CD4-positive, alpha-beta T cell (primary cell): ENCODE measurements at regions of chr1 and their contacts with region 1.

Region 1: GRCh38 chr1:16122916-16123315 is 33.0 kb downstream of the EPHA2 start:
- DNase-seq: peak in 3 of 14 experiments; percentile 48 to 70 (median 56)
- ATAC-seq: no peak
- H3K4me3 ChIP-seq: no peak overlapping the region
- H3K4me3 Mint-ChIP-seq: no peak overlapping the region
- H3K27ac ChIP-seq: no peak overlapping the region
- H3K27ac Mint-ChIP-seq: no peak overlapping the region
- H3K4me1 ChIP-seq: peaks cover 12% of the 10 kb centered on the region
- H3K4me1 Mint-ChIP-seq: peaks cover 6% of the 10 kb centered on the region
- H3K27me3 ChIP-seq: no peaks in the 10 kb centered on the region
- H3K27me3 Mint-ChIP-seq: no peaks in the 10 kb centered on the region
- CTCF ChIP-seq: no peak

Region 2: DNA sequence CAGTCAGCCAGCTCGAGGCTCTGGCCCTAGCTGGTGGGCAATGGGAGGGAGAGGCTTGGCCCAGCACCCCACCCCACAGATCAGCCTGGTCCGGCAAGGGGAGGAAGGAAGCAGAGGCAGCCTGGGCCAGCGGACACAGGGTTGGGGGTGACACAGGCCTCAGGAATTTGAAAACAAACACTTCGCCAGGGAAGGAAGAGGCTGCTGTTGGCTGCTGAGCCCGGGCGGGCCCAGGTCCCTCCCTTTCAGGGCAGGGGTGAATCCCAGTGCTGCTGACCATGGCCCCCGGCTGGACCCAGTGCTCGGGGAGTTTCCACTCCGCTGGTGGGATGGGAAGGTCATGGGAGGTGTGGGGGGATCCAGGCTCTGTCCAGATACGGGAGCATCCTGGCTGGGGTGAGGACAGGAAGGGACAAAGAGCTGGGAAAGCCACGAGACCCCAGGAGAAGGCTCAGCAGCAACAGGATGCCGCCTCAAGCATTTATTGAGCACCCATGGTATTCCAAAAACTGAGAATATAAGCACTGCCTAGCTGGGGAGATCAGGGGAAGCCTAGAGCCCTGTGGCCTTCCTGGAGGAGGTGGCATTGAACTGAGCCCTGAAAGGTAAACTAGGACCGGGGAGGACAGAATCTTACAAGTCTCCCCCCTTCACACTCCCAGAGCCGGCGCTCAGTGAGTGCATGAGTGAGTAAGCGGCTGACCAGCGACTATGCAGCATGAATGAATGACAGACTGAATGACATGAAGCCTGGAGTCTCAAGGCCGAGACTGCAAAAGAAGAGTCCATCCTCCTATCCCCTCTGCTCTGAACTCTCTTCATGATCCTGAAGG is 59.2 kb after region 1 on chr1:
- CTCF ChIA-PET with region 1: no interaction called
- POLR2A ChIA-PET with region 1: no interaction called
- intact Hi-C with region 1: loop called in 1 of 2 experiments (anchors 5 kb)
- DNase-seq: no peak
- ATAC-seq: no peak
- H3K4me3 ChIP-seq: no peak overlapping the region
- H3K4me3 Mint-ChIP-seq: no peak overlapping the region
- H3K27ac ChIP-seq: no peak overlapping the region
- H3K27ac Mint-ChIP-seq: no peak overlapping the region
- H3K4me1 ChIP-seq: no peaks in the 10 kb centered on the region
- H3K4me1 Mint-ChIP-seq: no peaks in the 10 kb centered on the region
- H3K27me3 ChIP-seq: no peaks in the 10 kb centered on the region
- H3K27me3 Mint-ChIP-seq: no peaks in the 10 kb centered on the region
- CTCF ChIP-seq: no peak

Region 3: GRCh38 chr1:16236511-16237342 is 113.8 kb after region 1 on chr1 and contains the start of gene CPLANE2:
- CTCF ChIA-PET with region 1: no interaction called
- POLR2A ChIA-PET with region 1: no interaction called
- intact Hi-C with region 1: no loop called
- DNase-seq: peak; percentile 93 to 98 (median 95)
- ATAC-seq: peak; percentile 78
- H3K4me3 ChIP-seq: peak within 1 kb of the TSS; percentile 85
- H3K4me3 Mint-ChIP-seq: peak within 1 kb of the TSS; percentile 93
- H3K27ac ChIP-seq: peak within 1 kb of the TSS; percentile 66 to 84
- H3K27ac Mint-ChIP-seq: peak within 1 kb of the TSS; percentile 84
- H3K4me1 ChIP-seq: peaks cover 23% of the 10 kb centered on the region
- H3K4me1 Mint-ChIP-seq: peaks cover 22% of the 10 kb centered on the region
- H3K27me3 ChIP-seq: no peaks in the 10 kb centered on the region
- H3K27me3 Mint-ChIP-seq: no peaks in the 10 kb centered on the region
- CTCF ChIP-seq: peak; percentile 11
- total RNA-seq, gene CPLANE2: 5.3 to 8.4 TPM

Region 4: GRCh38 chr1:16293538-16293937 is 170.6 kb after region 1 on chr1:
- CTCF ChIA-PET with region 1: no interaction called
- POLR2A ChIA-PET with region 1: no interaction called
- intact Hi-C with region 1: no loop called
- DNase-seq: peak in 2 of 14 experiments; percentile 8 to 9
- ATAC-seq: no peak
- H3K4me3 ChIP-seq: no peak overlapping the region
- H3K4me3 Mint-ChIP-seq: no peak overlapping the region
- H3K27ac ChIP-seq: no peak overlapping the region
- H3K27ac Mint-ChIP-seq: peak overlapping the region; percentile 24
- H3K4me1 ChIP-seq: no peaks in the 10 kb centered on the region
- H3K4me1 Mint-ChIP-seq: no peaks in the 10 kb centered on the region
- H3K27me3 ChIP-seq: no peaks in the 10 kb centered on the region
- H3K27me3 Mint-ChIP-seq: no peaks in the 10 kb centered on the region
- CTCF ChIP-seq: no peak